Activated T-helper 1 cell treated with anti-CD3 and anti-CD28 coated beads, Interleukin-12 subunit alpha, Interleukin-12 subunit beta, Interleukin-2, Interleukin-4 antibody, amounts not matched to agents 30 ng/mL and 10 ng/mL and 1 ng/mL, durations not matched to agents 14 hours and 24 hours and 36 hours (primary cell): ENCODE measurements at regions of chr4 and their contacts with region 1.

Region 1: GRCh38 chr4:40840985-40841571 is 91.3 kb downstream of the NSUN7 start:
- DNase-seq: peak; percentile 59
- H3K4me3 Mint-ChIP-seq: no peak overlapping the region
- H3K27ac Mint-ChIP-seq: no peak overlapping the region
- H3K4me1 Mint-ChIP-seq: peaks cover 8% of the 10 kb centered on the region
- H3K27me3 Mint-ChIP-seq: peaks cover 3% of the 10 kb centered on the region

Region 2: DNA sequence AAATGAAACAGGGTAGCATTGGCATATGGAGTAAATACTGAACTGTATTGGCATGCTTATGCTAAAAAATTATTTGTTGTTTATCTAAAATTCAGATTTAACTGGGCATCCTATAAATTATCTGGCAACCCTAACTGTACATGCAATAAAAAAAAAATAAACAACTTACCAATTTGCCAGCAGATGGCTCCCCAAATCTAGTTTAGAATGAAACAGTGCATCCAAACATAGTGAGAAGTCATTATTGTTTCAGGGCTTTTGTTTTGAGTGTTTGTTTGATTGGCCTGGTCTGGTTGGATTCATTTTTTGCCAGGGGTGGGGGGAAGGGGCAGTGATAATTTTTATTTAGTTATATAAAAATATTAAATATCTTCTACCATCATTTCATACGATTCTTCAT is 104.2 kb before region 1 on chr4:
- intact Hi-C with region 1: loop called (anchors 1 kb)
- DNase-seq: no peak
- H3K4me3 Mint-ChIP-seq: no peak overlapping the region
- H3K27ac Mint-ChIP-seq: no peak overlapping the region
- H3K4me1 Mint-ChIP-seq: peaks cover 22% of the 10 kb centered on the region
- H3K27me3 Mint-ChIP-seq: peaks cover 10% of the 10 kb centered on the region